OCI-LY7 (cell line): ENCODE measurements at regions of chr10 and their contacts with region 1.

Region 1: GRCh38 chr10:110918643-110919363 is at the start of gene BBIP1:
- DNase-seq: peak; percentile 100
- H3K4me3 ChIP-seq: peak within 1 kb of the TSS; percentile 97
- H3K27ac ChIP-seq: peak within 1 kb of the TSS; percentile 96
- H3K4me1 ChIP-seq: peaks cover 57% of the 10 kb centered on the region
- CTCF ChIP-seq: no peak
- total RNA-seq, gene BBIP1: 8.9 and 34.4 TPM in 2 replicates

Region 2: GRCh38 chr10:110304780-110305421 is 613.9 kb before region 1 on chr10 and contains the start of gene SMNDC1:
- CTCF ChIA-PET with region 1: no interaction called
- POLR2A ChIA-PET with region 1: no interaction called
- intact Hi-C with region 1: loop called (anchors 10 kb)
- DNase-seq: peak; percentile 99
- H3K4me3 ChIP-seq: peak within 1 kb of the TSS; percentile 99
- H3K27ac ChIP-seq: peak within 1 kb of the TSS; percentile 69
- H3K4me1 ChIP-seq: peaks cover 49% of the 10 kb centered on the region
- CTCF ChIP-seq: no peak
- total RNA-seq, gene SMNDC1: 8.1 and 10.0 TPM in 2 replicates

Region 3: DNA sequence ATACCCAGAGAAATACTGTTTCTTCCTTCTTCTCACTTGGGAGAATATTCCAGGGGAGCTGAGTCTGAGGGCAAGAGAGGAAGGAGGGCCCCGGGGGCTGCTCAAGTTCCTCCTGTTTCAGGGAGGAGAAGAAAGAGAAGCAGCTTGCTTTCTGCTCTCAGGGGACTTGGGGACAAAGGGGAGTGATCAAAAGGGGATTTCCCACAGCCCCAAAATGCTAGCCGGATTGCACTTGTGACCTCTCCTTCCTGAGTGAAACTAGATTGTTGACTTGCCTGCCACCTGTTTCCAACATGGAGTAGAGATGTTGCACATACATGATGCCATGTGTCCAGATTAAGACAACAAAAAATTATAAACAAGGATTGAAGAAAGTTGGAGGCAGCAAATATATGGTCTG is 75.8 kb before region 1 on chr10:
- CTCF ChIA-PET with region 1: interaction called, 3 read pairs
- POLR2A ChIA-PET with region 1: interaction called, 5 read pairs
- intact Hi-C with region 1: loop called (anchors 1 kb)
- DNase-seq: peak; percentile 98
- H3K4me3 ChIP-seq: peak overlapping the region; percentile 63
- H3K27ac ChIP-seq: peak overlapping the region; percentile 97
- H3K4me1 ChIP-seq: peaks cover 96% of the 10 kb centered on the region
- CTCF ChIP-seq: no peak

Region 4: DNA sequence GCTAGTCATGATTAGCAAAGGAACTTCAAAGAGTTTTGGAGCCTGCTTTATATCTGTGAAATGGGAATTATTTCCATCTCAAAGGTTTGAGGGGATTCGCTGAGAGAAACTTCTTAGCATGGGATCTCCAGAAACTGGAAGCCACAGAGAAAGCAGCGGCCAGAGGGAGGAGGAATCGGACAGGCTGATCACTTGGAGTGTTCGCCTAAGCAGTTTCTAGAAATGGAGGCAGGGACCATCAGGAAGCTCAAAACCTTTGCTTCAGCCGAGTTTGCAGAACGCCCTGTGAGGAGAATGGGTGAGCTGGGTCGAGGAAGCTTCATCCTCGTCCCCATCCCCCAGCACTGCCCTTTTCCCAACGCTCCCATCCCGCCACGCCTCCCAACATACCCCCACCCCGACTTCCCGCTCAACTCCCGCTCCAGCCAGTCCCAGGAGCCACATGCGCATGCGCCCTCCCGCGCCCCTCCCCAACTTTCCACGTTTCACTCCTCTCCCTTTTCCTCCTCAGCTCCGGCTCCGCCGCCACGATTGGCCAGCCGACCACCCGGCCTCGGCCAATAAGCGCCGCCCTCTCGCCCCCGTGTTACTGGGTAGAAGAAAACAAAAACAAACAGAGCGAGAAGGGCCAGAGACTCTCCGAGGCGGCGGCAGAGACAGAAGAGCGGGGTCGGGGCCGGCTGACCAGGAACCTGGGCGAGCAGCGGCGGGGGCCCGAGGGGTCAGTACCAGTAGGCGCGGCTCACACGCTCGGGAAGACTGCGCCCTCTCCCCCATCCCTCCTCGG is 47.3 kb before region 1 on chr10 and contains the start of gene PDCD4:
- CTCF ChIA-PET with region 1: no interaction called
- POLR2A ChIA-PET with region 1: interaction called, 10 read pairs
- intact Hi-C with region 1: loop called (anchors 1 kb)
- DNase-seq: peak; percentile 93
- H3K4me3 ChIP-seq: peak within 1 kb of the TSS; percentile 74
- H3K27ac ChIP-seq: peak within 1 kb of the TSS; percentile 92
- H3K4me1 ChIP-seq: peaks cover 69% of the 10 kb centered on the region
- CTCF ChIP-seq: no peak
- total RNA-seq, gene PDCD4: 59.0 and 70.6 TPM in 2 replicates

Region 5: GRCh38 chr10:110989016-110989415 is 70.2 kb after region 1 on chr10:
- CTCF ChIA-PET with region 1: no interaction called
- POLR2A ChIA-PET with region 1: no interaction called
- intact Hi-C with region 1: loop called (anchors 5 kb)
- DNase-seq: no peak
- H3K4me3 ChIP-seq: no peak overlapping the region
- H3K27ac ChIP-seq: no peak overlapping the region
- H3K4me1 ChIP-seq: no peaks in the 10 kb centered on the region
- CTCF ChIP-seq: no peak

Region 6: DNA sequence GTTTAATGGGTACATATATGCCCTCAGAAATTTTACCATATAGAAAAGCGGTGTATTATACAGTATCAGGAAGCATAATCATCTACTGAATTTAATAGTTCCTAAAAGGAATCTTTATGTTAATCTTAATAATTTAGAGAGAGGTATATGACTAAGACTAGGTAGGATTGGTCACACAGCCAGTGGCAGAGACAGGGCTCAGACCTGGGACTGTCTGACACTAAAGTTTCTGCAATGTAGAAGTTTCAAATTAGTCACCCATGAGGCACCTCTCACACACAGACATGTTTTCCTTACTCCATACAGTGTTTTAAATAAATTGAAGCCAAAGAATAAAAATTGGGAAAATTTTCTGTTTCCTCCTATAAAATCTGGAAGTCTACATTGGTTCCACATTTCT is 85.2 kb after region 1 on chr10:
- CTCF ChIA-PET with region 1: no interaction called
- POLR2A ChIA-PET with region 1: no interaction called
- intact Hi-C with region 1: no loop called
- DNase-seq: no peak
- H3K4me3 ChIP-seq: no peak overlapping the region
- H3K27ac ChIP-seq: no peak overlapping the region
- H3K4me1 ChIP-seq: no peaks in the 10 kb centered on the region
- CTCF ChIP-seq: no peak

Region 7: GRCh38 chr10:111739125-111739873 is 820.5 kb after region 1 on chr10:
- CTCF ChIA-PET with region 1: no interaction called
- POLR2A ChIA-PET with region 1: no interaction called
- intact Hi-C with region 1: no loop called
- DNase-seq: no peak
- H3K4me3 ChIP-seq: no peak overlapping the region
- H3K27ac ChIP-seq: no peak overlapping the region
- H3K4me1 ChIP-seq: no peaks in the 10 kb centered on the region
- CTCF ChIP-seq: no peak